ENCODE measurements at regions of chr15 and their contacts with region 1.

Region 1: GRCh38 chr15:75104804-75105535 is 81.6 kb downstream of the PPCDC start:
- DNase-seq: peak; percentile 64
- H3K4me3 Mint-ChIP-seq: peak overlapping the region; percentile 5
- H3K27ac Mint-ChIP-seq: peak overlapping the region; percentile 75
- H3K4me1 Mint-ChIP-seq: peaks cover 42% of the 10 kb centered on the region
- H3K27me3 Mint-ChIP-seq: peaks cover 13% of the 10 kb centered on the region

Region 2: DNA sequence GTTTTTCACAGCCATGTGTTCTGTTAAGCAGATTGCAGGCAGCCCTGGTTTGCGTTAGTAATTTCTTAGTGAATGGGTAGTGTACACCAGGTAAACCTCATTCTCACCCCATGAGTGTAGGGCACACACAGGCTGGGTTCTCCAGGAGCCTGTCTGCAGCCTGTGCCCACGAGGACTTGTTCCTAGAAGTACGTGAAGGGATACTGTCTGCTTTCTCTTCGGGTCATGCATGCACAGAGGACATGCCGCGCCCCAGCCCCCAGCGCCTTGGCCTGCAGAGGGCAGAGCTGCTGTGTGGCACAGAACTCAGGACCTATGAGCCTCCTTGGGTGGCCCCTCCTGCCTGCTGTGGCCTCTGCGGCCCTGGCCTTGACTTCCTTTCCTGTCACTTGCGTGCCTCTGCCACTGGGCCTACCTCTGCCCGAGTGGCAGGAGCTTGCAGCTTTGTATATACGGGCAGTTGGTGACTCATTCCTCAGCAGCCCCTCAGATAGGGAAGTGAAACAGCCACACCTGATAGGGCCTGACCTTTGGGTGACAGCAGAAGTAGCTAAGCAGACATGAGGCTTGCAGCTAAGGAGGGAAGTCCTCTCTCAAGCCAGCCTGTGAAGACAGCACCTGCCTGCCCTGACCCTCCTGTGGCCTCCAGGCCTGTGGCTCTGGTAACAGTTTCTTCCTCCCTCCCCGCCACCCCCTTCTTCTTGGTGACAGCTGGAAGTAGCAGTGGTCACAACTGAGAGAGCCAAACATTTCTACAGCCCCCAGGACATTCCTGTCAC is 62.1 kb before region 1 on chr15:
- CTCF ChIA-PET with region 1: interaction called, 27 read pairs
- POLR2A ChIA-PET with region 1: interaction called, 10 read pairs
- DNase-seq: peak; percentile 92
- H3K4me3 Mint-ChIP-seq: peak overlapping the region; percentile 74
- H3K27ac Mint-ChIP-seq: peak overlapping the region; percentile 86
- H3K4me1 Mint-ChIP-seq: peaks cover 91% of the 10 kb centered on the region
- H3K27me3 Mint-ChIP-seq: no peaks in the 10 kb centered on the region

Region 3: DNA sequence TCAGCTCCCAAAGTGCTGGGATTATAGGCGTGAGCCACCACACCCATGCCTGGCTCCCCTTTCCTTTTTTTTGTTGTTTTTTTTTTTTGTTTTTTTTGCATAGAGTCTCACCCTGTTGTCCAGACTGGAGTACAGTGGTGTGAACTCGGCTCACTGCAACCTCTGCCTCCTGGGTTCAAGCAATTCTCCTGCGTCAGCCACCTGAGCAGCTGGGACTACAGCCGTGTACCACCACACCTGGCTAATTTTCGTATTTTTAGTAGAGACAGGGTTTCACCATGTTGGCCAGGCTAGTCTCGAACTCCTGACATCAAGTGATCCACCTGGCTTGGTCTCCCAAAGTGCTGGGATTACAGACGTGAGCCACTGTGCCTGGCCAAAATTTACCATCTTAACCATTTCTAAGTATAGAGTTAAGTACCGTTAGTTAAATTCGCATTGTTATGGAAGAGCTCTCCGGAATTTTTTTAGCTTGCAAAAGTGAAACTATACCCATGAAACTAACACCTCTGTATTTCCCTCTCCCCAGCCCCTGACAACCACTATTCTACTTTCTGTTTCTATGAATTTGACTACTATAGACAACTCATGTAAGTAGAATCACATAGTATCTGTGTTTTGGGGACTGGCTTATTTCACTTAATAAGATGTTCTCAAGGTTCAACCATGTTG is 25.8 kb after region 1 on chr15:
- CTCF ChIA-PET with region 1: interaction called, 4 read pairs
- POLR2A ChIA-PET with region 1: interaction called, 13 read pairs
- DNase-seq: peak; percentile 25
- H3K4me3 Mint-ChIP-seq: peak overlapping the region; percentile 66
- H3K27ac Mint-ChIP-seq: peak overlapping the region; percentile 40
- H3K4me1 Mint-ChIP-seq: peaks cover 33% of the 10 kb centered on the region
- H3K27me3 Mint-ChIP-seq: peaks cover 41% of the 10 kb centered on the region

Region 4: GRCh38 chr15:75171408-75171807 is 66.4 kb after region 1 on chr15:
- CTCF ChIA-PET with region 1: interaction called, 3 read pairs
- POLR2A ChIA-PET with region 1: interaction called, 11 read pairs
- DNase-seq: peak; percentile 73
- H3K4me3 Mint-ChIP-seq: no peak overlapping the region
- H3K27ac Mint-ChIP-seq: peak overlapping the region; percentile 61
- H3K4me1 Mint-ChIP-seq: peaks cover 59% of the 10 kb centered on the region
- H3K27me3 Mint-ChIP-seq: peaks cover 9% of the 10 kb centered on the region

Measured in activated CD4-positive, alpha-beta memory T cell treated with anti-CD3 and anti-CD28 coated beads, Interleukin-2, amount 10 ng/mL, durations not matched to agents 7 days and 5 days (primary cell).